PC-9 (cell line): ENCODE measurements at regions of chr9 and their contacts with region 1.

Region 1: DNA sequence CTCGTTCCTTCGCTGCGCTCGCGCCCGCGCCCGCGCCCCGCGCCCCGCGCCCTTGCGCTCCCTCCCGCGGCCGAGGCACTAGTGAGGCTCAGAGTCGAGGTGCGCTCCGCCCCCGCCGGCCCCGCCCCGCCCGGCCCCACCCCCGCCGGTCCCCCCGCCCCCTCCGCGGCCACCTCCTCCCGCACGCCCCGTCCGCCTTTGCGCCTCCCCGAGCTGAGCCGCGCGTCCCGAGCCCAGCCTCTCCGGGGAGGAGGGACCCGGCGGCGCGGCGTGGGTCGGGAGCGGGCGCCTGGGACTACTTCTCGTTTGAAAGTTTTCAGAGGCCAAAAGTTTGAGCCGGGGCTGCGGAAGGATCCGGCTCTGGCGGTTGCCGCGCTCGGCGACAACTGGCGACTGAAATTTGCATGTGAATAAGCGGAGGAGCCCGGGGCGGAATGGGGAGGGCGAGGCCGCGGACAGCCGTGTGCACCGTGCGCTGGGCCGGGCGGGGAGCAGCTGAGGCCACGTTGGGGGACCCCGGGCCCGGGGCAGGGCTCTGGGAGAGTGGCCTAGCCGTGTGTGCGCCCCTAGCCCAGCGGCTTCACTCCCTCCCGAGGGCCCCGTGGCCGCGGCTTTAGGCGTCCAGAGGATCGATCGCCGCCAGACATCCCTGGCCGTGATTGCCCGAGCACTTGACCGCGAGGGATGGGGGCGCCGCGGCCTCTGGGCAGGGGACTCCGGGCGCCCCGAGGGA is at the start of gene NOTCH1:
- DNase-seq: peak; percentile 80 to 97
- H3K4me3 ChIP-seq: peak within 1 kb of the TSS; percentile 96
- H3K27ac ChIP-seq: peak within 1 kb of the TSS; percentile 99
- H3K4me1 ChIP-seq: peaks cover 28% of the 10 kb centered on the region
- H3K27me3 ChIP-seq: no peaks in the 10 kb centered on the region
- CTCF ChIP-seq: no peak
- total RNA-seq, gene NOTCH1: 39.2 and 51.4 TPM in 2 replicates

Region 2: GRCh38 chr9:136467766-136468563 is 78.2 kb before region 1 on chr9:
- CTCF ChIA-PET with region 1: no interaction called
- POLR2A ChIA-PET with region 1: no interaction called
- intact Hi-C with region 1: no loop called
- DNase-seq: no peak
- H3K4me3 ChIP-seq: no peak overlapping the region
- H3K27ac ChIP-seq: no peak overlapping the region
- H3K4me1 ChIP-seq: no peaks in the 10 kb centered on the region
- H3K27me3 ChIP-seq: no peaks in the 10 kb centered on the region
- CTCF ChIP-seq: no peak; the same call in 1 of the 2 replicates

Region 3: DNA sequence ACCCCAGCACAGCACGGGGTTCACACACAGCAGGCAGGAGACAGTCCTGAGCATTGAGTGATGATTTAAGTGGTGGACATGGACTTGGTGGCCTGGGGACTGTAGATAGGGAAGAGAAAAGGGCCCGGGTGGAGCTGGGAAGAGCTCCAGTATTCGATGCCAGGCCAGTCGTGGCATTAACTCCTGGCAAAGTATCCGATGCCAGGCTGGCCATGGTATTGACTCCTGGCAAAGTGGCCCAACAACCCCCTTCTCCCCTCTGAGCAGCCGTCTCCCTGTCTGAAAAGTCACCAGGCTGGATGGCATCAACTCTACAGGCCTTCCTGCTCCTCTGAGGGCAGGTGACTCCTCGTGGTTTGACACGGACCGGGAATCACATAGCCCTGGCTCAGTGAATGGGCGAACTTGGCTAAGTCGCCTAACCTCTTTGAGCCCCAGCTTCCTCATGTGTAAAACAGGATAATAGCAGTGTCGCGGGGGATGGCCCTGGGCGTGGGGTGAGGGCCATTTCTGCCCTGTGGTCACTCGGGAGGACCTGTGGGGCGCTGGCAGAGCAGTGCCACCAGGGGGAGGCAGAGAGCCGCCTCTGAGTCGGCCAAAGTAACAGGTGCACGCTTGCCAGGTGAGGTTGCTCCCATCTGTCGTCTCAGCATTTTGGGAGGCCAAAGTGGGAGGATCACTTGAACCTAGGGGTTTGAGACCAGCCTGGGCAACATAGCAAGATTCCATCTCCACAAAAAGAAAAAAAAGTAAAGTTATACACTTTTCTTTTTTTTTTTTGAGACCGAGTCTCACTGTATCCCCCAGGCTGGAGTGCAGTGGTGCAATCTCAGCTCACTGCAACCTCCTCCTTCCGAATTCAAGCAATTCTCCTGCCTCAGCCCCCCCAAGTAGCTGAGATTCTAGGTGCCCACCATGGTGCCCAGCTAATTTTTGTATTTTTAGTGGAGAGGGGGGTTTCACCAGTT is 57.6 kb before region 1 on chr9:
- CTCF ChIA-PET with region 1: interaction called, 7 read pairs
- POLR2A ChIA-PET with region 1: interaction called, 3 read pairs
- intact Hi-C with region 1: loop called (anchors 1 kb)
- DNase-seq: peak; percentile 50 to 87
- H3K4me3 ChIP-seq: no peak overlapping the region
- H3K27ac ChIP-seq: no peak overlapping the region
- H3K4me1 ChIP-seq: peaks cover 7% of the 10 kb centered on the region
- H3K27me3 ChIP-seq: no peaks in the 10 kb centered on the region
- CTCF ChIP-seq: peak; percentile 98

Region 4: DNA sequence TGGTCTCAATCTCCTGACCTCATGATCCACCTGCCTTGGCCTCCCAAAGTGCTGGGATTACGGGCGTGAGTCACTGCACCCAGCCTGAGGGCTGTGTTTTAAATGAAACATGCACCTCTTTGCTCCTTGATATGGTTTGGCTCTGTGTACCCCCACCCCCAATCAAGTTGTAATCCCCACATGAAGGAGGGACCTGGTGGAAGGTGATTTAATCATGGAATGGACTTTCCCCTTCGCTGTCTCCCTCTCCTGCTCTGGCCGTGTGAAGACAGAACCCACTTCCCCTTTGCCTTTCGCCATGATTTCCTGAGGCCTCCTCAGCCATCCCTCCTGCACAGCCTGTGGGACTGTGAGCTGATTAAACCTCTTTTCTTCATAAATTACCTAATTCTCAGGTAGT is 12.2 kb after region 1 on chr9:
- CTCF ChIA-PET with region 1: no interaction called
- POLR2A ChIA-PET with region 1: interaction called, 19 read pairs
- intact Hi-C with region 1: no loop called
- DNase-seq: peak in 1 of 2 experiments; percentile 71
- H3K4me3 ChIP-seq: peak overlapping the region; percentile 15; the same call in 1 of the 2 replicates
- H3K27ac ChIP-seq: peak overlapping the region; percentile 94
- H3K4me1 ChIP-seq: peaks cover 25% of the 10 kb centered on the region
- H3K27me3 ChIP-seq: no peaks in the 10 kb centered on the region
- CTCF ChIP-seq: no peak

Region 5: DNA sequence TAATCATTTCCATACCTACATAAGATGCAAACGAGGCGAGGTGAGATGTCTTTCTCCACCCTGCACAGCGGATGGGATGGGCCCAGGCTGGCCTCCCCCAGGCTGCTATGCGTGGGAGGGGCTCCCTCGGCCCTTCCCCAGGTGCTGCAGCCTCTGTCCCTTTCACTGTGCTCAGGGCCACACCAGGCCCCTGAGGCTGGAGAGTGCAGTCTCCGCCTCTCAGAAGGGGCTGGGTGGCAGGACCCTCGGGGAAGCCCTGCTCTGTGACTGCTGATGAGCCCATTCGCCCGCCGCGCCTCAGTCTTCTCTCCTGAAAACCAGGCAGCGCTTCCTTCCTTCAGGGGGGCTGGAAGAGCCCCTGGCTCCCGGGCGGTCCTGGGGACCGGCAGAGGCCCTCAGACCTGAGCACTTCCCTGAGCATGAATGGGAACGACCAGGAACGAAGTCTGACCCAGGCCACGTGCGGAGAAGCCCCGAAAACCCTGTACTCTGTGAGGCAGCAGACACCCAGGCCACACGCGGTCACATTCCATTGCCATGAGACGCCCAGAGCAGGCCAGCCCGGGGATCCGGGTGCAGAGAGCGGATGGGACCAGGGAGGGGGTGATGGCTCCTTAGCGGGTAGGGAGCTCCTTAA is 21.6 kb after region 1 on chr9:
- CTCF ChIA-PET with region 1: no interaction called
- POLR2A ChIA-PET with region 1: interaction called, 3 read pairs
- intact Hi-C with region 1: loop called (anchors 1 kb)
- DNase-seq: peak; percentile 85 to 89
- H3K4me3 ChIP-seq: no peak overlapping the region
- H3K27ac ChIP-seq: peak overlapping the region; percentile 68
- H3K4me1 ChIP-seq: peaks cover 29% of the 10 kb centered on the region
- H3K27me3 ChIP-seq: no peaks in the 10 kb centered on the region
- CTCF ChIP-seq: no peak

Region 6: GRCh38 chr9:136578915-136579649 is 33.0 kb after region 1 on chr9:
- CTCF ChIA-PET with region 1: no interaction called
- POLR2A ChIA-PET with region 1: no interaction called
- intact Hi-C with region 1: loop called (anchors 1 kb)
- DNase-seq: peak in 1 of 2 experiments; percentile 34
- H3K4me3 ChIP-seq: no peak overlapping the region; the same call in 1 of the 2 replicates
- H3K27ac ChIP-seq: peak overlapping the region; percentile 70; the same call in 1 of the 2 replicates
- H3K4me1 ChIP-seq: peaks cover 26% of the 10 kb centered on the region
- H3K27me3 ChIP-seq: no peaks in the 10 kb centered on the region
- CTCF ChIP-seq: no peak

Region 7: DNA sequence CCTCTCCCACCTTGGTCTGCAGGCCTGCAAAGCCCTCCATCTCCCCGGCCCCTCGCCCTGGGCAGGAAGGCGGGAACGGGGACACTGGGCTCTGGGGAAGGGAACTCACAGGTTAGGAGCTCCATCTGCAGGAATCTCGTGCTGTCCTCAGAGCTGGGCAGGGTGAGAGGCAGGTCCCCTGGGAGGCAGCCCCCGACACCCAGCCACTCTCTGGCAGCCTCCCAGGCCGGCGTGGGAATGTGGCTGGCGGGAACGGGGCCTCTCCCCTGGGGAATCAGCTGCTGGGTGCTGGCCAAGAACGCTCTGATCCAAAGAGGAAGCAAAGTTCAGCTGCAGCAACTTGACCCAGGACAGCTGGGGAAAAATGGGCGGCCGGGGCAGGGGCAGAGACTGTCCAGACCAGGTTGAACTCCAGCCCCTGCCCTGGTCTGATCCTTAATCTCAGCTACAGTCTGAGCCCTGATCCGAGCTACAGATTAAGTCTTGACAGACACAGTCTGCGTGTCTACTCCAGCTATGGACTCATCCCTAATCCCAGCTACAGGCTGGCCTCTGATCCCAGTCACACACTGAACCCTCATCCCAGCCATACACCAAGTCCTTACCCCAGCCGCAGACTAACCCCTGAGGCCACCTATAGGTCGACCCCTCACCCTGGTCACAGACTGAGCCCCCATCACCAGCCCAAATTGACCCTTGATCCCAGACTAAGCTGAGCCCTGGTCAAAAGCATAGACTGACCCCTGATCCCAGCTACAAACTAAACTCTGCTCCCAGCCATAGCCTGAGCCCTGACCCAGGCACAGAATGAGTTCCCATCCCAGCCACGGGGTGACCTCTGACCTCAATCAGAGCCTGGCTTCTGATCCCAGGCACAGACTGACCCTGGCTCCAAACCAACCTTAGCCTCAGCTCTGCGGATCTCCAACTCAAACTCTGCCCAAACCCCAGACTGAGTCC is 79.2 kb after region 1 on chr9:
- CTCF ChIA-PET with region 1: no interaction called
- POLR2A ChIA-PET with region 1: interaction called, 8 read pairs
- intact Hi-C with region 1: loop called (anchors 2 kb)
- DNase-seq: peak in 1 of 2 experiments; percentile 75
- H3K4me3 ChIP-seq: no peak overlapping the region
- H3K27ac ChIP-seq: no peak overlapping the region
- H3K4me1 ChIP-seq: no peaks in the 10 kb centered on the region
- H3K27me3 ChIP-seq: no peaks in the 10 kb centered on the region
- CTCF ChIP-seq: peak; percentile 35; the same call in 1 of the 2 replicates

Region 8: GRCh38 chr9:136694236-136694942 is 148.3 kb after region 1 on chr9:
- CTCF ChIA-PET with region 1: no interaction called
- POLR2A ChIA-PET with region 1: no interaction called
- intact Hi-C with region 1: loop called (anchors 5 kb)
- DNase-seq: peak in 1 of 2 experiments; percentile 82
- H3K4me3 ChIP-seq: peak overlapping the region; percentile 43; the same call in 1 of the 2 replicates
- H3K27ac ChIP-seq: peak overlapping the region; percentile 94
- H3K4me1 ChIP-seq: peaks cover 47% of the 10 kb centered on the region
- H3K27me3 ChIP-seq: no peaks in the 10 kb centered on the region
- CTCF ChIP-seq: peak; percentile 91